Breast epithelium (tissue), 4 donors: ENCODE measurements at regions of chr11 and their contacts with region 1.

Region 1: DNA sequence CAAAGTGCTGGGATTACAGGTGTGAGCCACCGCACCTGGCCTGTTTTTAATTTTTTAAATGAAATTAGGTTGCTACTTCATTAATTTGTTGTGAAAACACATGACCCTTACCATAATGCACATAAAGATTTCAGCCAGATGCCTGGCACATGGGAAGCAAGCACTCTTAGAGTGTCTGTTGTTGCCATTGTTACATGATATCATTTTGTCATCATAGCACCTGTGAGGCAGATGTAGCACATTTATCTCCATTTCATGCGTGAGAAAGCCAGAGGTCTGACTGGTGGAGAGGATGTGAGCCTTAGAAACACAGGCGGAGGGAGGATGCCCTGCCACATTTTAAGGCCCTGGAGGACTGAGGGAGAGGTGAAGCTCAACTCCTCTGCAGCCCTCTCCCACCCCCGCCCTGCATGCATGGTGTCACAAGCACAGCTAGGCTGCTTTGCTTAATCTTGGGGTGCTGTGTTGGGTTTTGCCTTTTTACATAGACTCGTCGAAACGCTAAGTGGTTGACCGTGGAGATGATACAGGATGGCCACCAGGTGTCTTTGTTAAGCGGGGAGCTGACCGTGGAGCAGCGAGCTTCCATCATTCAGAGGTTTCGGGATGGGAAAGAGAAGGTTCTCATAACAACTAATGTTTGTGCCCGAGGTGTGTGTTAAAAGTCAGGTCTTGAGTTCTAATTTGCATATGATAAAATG is 14.0 kb downstream of the DDX25 start:
- DNase-seq: no peak
- H3K4me3 ChIP-seq: no peak overlapping the region
- H3K27ac ChIP-seq: no peak overlapping the region
- H3K4me1 ChIP-seq: no peaks in the 10 kb centered on the region
- H3K27me3 ChIP-seq: no peaks in the 10 kb centered on the region
- CTCF ChIP-seq: no peak
- POLR2A ChIP-seq: no peak

Region 2: GRCh38 chr11:125603207-125603606 is 315.1 kb before region 1 on chr11:
- intact Hi-C with region 1: no loop called
- DNase-seq: no peak
- H3K4me3 ChIP-seq: no peak overlapping the region
- H3K27ac ChIP-seq: no peak overlapping the region
- H3K4me1 ChIP-seq: no peaks in the 10 kb centered on the region
- H3K27me3 ChIP-seq: no peaks in the 10 kb centered on the region
- CTCF ChIP-seq: no peak
- POLR2A ChIP-seq: no peak

Region 3: DNA sequence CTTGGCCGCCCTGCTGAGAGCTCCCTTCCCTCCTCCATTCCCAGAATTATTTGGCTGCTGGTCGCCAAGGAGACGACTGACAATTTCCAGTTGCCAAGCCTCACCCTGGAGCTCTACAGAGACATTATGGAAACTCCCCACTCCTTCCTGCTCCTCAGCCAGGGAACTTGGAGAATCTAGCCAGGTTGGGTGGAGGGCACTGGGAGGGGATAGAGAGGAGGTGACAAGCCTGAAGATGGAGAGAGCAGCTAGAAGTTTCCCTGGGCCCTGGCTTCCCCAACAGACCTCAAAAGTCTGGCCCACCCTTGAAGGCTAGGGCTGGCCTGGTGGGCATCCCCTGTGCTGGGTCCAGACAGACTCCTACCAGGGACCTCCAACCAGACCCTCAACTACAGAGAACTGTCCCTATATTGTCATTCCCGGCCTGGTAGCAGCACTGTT is 20.8 kb after region 1 on chr11:
- intact Hi-C with region 1: no loop called
- DNase-seq: no peak
- H3K4me3 ChIP-seq: no peak overlapping the region
- H3K27ac ChIP-seq: no peak overlapping the region
- H3K4me1 ChIP-seq: no peaks in the 10 kb centered on the region
- H3K27me3 ChIP-seq: no peaks in the 10 kb centered on the region
- CTCF ChIP-seq: no peak
- POLR2A ChIP-seq: no peak

Region 4: DNA sequence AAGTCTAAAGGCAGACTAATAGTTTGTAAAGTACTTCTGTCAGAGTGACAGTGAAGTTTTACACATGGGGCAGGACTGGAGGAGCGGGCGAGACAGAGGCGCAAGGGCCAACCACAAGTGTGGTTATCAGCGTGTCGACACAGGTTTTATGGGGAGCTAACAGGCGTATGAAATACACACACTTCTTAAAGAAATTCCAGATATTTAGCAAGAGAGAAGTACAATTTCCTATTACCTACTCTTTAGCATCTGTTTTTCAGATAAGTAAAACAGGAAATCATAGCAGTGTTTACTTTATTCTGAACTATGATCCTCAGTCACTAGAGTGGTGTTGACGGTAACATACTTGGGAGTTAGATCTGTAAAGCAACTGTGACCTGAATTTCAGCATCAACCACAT is 50.1 kb after region 1 on chr11:
- intact Hi-C with region 1: loop called (anchors 2 kb)
- DNase-seq: no peak
- H3K4me3 ChIP-seq: no peak overlapping the region
- H3K27ac ChIP-seq: no peak overlapping the region
- H3K4me1 ChIP-seq: no peaks in the 10 kb centered on the region
- H3K27me3 ChIP-seq: no peaks in the 10 kb centered on the region
- CTCF ChIP-seq: no peak
- POLR2A ChIP-seq: no peak